Activated CD8-positive, alpha-beta T cell treated with anti-CD3 and anti-CD28 coated beads, Interleukin-2, amount 10 ng/mL, durations not matched to agents 7 days and 5 days (primary cell): ENCODE measurements at regions of chr2 and their contacts with region 1.

Region 1: DNA sequence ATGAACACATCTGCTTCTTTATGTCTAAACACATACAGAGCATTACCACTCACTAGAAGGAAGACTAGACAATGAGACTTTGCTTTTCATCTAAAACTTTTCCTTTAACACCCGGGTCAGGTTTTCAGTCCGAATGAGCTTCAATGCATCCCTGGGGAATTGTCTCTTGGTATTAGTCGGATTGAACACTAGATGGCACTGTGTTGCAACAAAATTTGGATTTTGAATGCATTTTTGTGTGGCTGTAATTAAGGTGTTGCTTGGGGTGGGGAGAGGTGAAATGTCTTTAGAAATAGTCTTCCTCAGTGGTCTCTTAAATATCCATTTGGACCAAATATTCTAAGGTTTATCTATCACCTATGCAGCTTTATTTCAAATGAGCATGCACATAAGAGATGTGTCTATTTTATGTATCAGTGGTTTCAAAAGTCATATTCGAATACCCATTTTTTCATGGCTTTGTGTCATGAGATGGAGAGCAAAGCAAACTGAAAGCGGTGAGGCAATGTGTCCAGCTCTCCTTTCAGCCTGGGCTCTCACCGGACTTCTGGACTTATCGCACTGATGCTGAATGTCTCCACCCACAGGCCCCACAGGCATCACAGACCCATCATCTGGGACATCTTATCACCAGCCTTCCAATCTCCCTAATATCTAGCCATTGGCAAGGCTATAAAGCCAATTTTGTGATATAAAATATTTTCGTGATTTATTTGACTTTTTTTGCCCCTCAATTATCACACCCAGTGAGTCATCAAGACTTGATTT is 510.3 kb downstream of the RNF144A start:
- DNase-seq: peak; percentile 59
- ATAC-seq: no peak
- H3K4me3 Mint-ChIP-seq: no peak overlapping the region
- H3K27ac Mint-ChIP-seq: peak overlapping the region; percentile 68
- H3K4me1 Mint-ChIP-seq: peaks cover 46% of the 10 kb centered on the region
- H3K27me3 Mint-ChIP-seq: no peaks in the 10 kb centered on the region

Region 2: GRCh38 chr2:6934758-6935651 is 492.5 kb before region 1 on chr2:
- CTCF ChIA-PET with region 1: no interaction called
- POLR2A ChIA-PET with region 1: no interaction called
- DNase-seq: no peak
- ATAC-seq: no peak
- H3K4me3 Mint-ChIP-seq: no peak overlapping the region
- H3K27ac Mint-ChIP-seq: no peak overlapping the region
- H3K4me1 Mint-ChIP-seq: peaks cover 65% of the 10 kb centered on the region
- H3K27me3 Mint-ChIP-seq: no peaks in the 10 kb centered on the region

Region 3: GRCh38 chr2:7209757-7210555 is 217.5 kb before region 1 on chr2:
- CTCF ChIA-PET with region 1: no interaction called
- POLR2A ChIA-PET with region 1: no interaction called
- DNase-seq: no peak
- ATAC-seq: no peak
- H3K4me3 Mint-ChIP-seq: no peak overlapping the region
- H3K27ac Mint-ChIP-seq: no peak overlapping the region
- H3K4me1 Mint-ChIP-seq: no peaks in the 10 kb centered on the region
- H3K27me3 Mint-ChIP-seq: no peaks in the 10 kb centered on the region

Region 4: DNA sequence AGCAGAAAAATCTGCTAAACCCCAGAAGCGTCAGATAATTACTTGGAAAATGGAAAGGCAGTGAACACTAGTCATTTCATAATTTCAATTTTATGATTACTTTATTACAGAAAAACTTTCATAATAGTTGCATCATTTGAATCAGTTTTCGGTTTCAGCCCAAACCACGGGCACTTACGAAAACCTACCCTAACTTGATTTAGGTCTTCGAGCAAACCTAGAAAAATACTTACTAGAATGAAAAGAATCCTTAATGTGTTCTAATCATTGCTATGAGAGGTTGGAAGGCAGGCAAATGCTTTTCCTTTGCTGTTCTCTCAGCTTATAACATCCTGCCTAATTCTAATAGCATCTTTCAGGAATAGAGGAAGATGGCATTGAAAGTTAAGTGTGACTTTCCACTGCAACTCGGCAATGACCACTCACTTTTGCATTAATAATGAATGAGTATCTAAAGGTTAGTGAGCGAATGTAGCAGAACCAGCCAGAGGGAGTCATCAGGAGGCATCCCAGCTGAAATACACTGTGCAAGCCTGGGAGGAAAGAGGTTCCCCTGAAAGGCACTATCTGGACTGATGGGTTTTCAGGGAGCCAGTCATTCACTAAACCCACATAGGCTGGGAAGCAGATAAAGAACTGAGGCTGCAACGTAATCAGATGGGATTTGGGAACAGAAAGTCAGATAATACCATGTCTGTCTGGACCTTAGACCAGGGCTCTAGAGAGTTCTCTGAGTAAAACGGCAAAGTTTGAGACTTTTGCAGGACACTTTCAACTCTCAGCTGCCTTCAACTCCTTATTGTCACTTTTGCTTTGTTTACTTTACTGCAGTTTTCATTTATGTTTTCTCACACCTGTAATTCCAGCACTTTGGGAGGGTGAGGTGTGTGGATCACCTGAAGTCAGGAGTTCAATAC is 10.5 kb after region 1 on chr2:
- CTCF ChIA-PET with region 1: interaction called, 16 read pairs
- POLR2A ChIA-PET with region 1: interaction called, 5 read pairs
- DNase-seq: no peak
- ATAC-seq: peak; percentile 52
- H3K4me3 Mint-ChIP-seq: peak overlapping the region; percentile 51
- H3K27ac Mint-ChIP-seq: peak overlapping the region; percentile 86
- H3K4me1 Mint-ChIP-seq: peaks cover 71% of the 10 kb centered on the region
- H3K27me3 Mint-ChIP-seq: no peaks in the 10 kb centered on the region

Region 5: DNA sequence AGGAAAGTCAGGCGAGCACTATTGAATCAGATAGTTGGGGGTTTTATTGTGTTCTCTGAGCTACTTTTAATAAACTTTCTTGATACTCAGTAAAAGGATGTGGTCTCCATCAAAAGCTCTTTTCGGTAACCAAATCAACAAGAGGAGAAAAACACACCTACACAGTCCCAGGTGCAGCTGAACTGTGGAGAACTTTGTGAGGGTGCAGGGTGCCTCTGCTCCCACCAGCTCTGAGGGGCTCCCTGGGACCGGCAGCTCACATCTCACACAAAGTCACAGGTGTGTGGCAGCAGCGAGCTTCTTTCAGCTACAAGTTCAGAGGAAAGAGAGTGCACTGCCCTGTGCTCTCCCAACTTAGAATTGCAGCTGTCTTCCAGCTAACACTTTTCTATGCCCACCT is 140.2 kb after region 1 on chr2:
- CTCF ChIA-PET with region 1: interaction called, 38 read pairs
- POLR2A ChIA-PET with region 1: interaction called, 11 read pairs
- DNase-seq: peak; percentile 80
- ATAC-seq: peak; percentile 94
- H3K4me3 Mint-ChIP-seq: peak overlapping the region; percentile 60
- H3K27ac Mint-ChIP-seq: peak overlapping the region; percentile 95
- H3K4me1 Mint-ChIP-seq: peaks cover 63% of the 10 kb centered on the region
- H3K27me3 Mint-ChIP-seq: no peaks in the 10 kb centered on the region

Region 6: GRCh38 chr2:7672027-7672684 is 244.7 kb after region 1 on chr2:
- CTCF ChIA-PET with region 1: interaction called, 29 read pairs
- POLR2A ChIA-PET with region 1: interaction called, 4 read pairs
- DNase-seq: peak; percentile 77
- ATAC-seq: peak; percentile 85
- H3K4me3 Mint-ChIP-seq: peak overlapping the region; percentile 40
- H3K27ac Mint-ChIP-seq: peak overlapping the region; percentile 87
- H3K4me1 Mint-ChIP-seq: peaks cover 53% of the 10 kb centered on the region
- H3K27me3 Mint-ChIP-seq: no peaks in the 10 kb centered on the region

Region 7: GRCh38 chr2:8681786-8682692 is 1254.6 kb after region 1 on chr2 and contains the start of gene ID2:
- CTCF ChIA-PET with region 1: interaction called, 18 read pairs
- POLR2A ChIA-PET with region 1: interaction called, 15 read pairs
- DNase-seq: peak; percentile 99
- ATAC-seq: peak; percentile 68
- H3K4me3 Mint-ChIP-seq: peak within 1 kb of the TSS; percentile 99
- H3K27ac Mint-ChIP-seq: peak within 1 kb of the TSS; percentile 97
- H3K4me1 Mint-ChIP-seq: peaks cover 39% of the 10 kb centered on the region
- H3K27me3 Mint-ChIP-seq: peaks cover 11% of the 10 kb centered on the region
- total RNA-seq, gene ID2: 257 to 263 TPM